ENCODE measurements at regions of chr9 and their contacts with region 1.

Region 1: GRCh38 chr9:89549031-89549644 is 51.2 kb upstream of the SEMA4D start:
- DNase-seq: peak; percentile 62
- ATAC-seq: peak; percentile 100
- H3K4me3 ChIP-seq: no peak overlapping the region
- H3K27ac ChIP-seq: no peak overlapping the region
- H3K4me1 ChIP-seq: peaks cover 10% of the 10 kb centered on the region
- H3K27me3 ChIP-seq: no peaks in the 10 kb centered on the region
- CTCF ChIP-seq: peak; percentile 91 to 95 (median 93)
- EP300 ChIP-seq: no peak
- POLR2A ChIP-seq: no peak
- RAD21 ChIP-seq: peak; percentile 92

Region 2: GRCh38 chr9:89340332-89340731 is 208.8 kb before region 1 on chr9:
- CTCF ChIA-PET with region 1: interaction called, 9 read pairs
- POLR2A ChIA-PET with region 1: no interaction called
- RAD21 ChIA-PET with region 1: interaction called, 18 read pairs
- SMC1A ChIA-PET with region 1: interaction called, 10 read pairs
- in situ Hi-C with region 1: no loop called
- intact Hi-C with region 1: no loop called
- DNase-seq: peak; percentile 45
- ATAC-seq: peak; percentile 97
- H3K4me3 ChIP-seq: peak overlapping the region; percentile 37; the same call in 1 of the 2 replicates
- H3K27ac ChIP-seq: peak overlapping the region; percentile 85
- H3K4me1 ChIP-seq: peaks cover 22% of the 10 kb centered on the region
- H3K27me3 ChIP-seq: no peaks in the 10 kb centered on the region
- CTCF ChIP-seq: no peak
- EP300 ChIP-seq: no peak
- POLR2A ChIP-seq: no peak
- RAD21 ChIP-seq: no peak

Region 3: DNA sequence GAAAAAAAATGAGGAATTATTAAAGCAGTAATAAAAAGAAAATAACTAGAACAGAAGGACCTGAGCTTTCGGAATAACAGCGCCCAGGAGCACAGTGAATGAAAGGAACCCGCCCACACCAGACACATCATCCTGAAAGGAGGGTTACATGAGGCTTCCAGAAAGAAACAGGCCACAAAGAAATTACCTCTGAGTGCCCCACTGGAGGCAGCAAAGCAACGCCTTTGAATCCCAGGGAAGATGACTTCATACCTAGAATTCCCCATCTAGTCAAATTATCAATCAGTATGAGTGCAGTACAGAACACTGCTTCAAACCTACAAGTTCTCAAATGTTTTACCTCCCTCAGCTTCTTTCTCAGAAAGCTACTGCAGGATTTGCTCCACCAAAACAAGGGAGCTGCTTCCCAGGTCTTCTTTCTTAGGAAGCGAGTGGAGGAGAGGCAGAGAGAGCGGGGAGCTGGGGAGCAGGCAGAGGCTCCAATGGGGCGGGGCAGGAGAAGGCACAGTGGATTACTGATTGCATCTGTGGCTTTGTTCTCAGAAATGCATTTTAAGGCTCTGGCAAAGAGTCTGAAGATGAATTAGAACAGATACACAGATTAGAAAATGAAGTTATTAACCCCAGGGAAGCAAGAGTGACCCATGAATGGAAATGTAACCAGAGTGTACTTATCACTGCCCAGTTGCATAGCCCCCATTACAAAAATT is 138.3 kb before region 1 on chr9:
- CTCF ChIA-PET with region 1: interaction called, 32 read pairs
- POLR2A ChIA-PET with region 1: no interaction called
- RAD21 ChIA-PET with region 1: interaction called, 58 read pairs
- SMC1A ChIA-PET with region 1: interaction called, 34 read pairs
- in situ Hi-C with region 1: no loop called
- intact Hi-C with region 1: loop called (anchors 1 kb)
- DNase-seq: peak; percentile 75
- ATAC-seq: peak; percentile 72
- H3K4me3 ChIP-seq: peak overlapping the region; percentile 48
- H3K27ac ChIP-seq: peak overlapping the region; percentile 66
- H3K4me1 ChIP-seq: peaks cover 66% of the 10 kb centered on the region
- H3K27me3 ChIP-seq: no peaks in the 10 kb centered on the region
- CTCF ChIP-seq: peak; percentile 34 to 63 (median 50); a peak in 5 of 6 replicates
- EP300 ChIP-seq: no peak
- POLR2A ChIP-seq: no peak
- RAD21 ChIP-seq: peak; percentile 79

Region 4: DNA sequence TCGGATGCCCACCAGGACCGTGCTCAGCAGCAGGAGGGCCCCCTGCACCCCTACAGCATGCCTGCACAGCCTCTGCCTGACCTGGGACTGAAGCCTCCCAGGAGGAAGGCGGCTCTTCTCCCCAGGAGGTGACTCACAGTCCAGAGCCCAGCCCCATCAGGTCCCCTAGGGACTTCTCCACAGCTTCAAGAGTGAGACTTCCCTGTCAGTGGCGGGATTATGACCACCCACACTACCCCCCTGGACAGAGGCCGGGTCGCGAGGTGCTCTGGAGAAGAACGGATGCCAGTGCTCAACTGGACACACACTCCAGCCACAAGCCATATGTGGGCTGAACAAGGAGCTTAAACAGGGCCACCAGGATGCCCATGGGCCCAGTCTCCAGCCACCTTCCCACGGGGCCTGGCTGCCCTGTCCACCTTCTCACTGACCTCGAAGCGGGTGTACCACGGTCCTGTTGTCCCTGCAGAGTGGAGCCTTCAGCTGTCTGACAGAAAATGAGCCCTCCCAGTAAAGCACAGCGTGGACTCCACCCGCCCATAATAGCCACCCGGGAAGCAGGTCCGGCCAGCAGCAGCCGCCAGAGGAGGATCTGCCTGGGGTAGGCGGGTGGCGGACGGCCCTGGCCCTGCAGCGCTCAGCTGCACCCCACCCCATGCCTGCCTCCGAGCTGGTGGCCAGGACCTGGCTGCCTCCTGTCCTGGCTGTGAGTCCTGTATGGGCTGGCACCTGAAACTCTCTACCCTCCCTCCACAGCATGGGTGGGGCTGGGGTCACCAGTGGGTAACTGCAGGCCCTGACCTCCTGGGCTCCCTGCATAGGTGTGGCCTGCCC is 105.9 kb before region 1 on chr9:
- CTCF ChIA-PET with region 1: interaction called, 15 read pairs
- POLR2A ChIA-PET with region 1: interaction called, 6 read pairs
- RAD21 ChIA-PET with region 1: interaction called, 16 read pairs
- SMC1A ChIA-PET with region 1: interaction called, 32 read pairs
- in situ Hi-C with region 1: no loop called
- intact Hi-C with region 1: no loop called
- DNase-seq: no peak
- ATAC-seq: peak; percentile 77
- H3K4me3 ChIP-seq: peak overlapping the region; percentile 3; the same call in 1 of the 2 replicates
- H3K27ac ChIP-seq: peak overlapping the region; percentile 63
- H3K4me1 ChIP-seq: peaks cover 51% of the 10 kb centered on the region
- H3K27me3 ChIP-seq: no peaks in the 10 kb centered on the region
- CTCF ChIP-seq: no peak
- EP300 ChIP-seq: no peak
- POLR2A ChIP-seq: no peak; the same call in 1 of the 2 replicates
- RAD21 ChIP-seq: no peak

Region 5: GRCh38 chr9:89483592-89484522 is 65.3 kb before region 1 on chr9:
- CTCF ChIA-PET with region 1: interaction called, 22 read pairs
- POLR2A ChIA-PET with region 1: no interaction called
- RAD21 ChIA-PET with region 1: interaction called, 18 read pairs
- SMC1A ChIA-PET with region 1: interaction called, 26 read pairs
- in situ Hi-C with region 1: no loop called
- intact Hi-C with region 1: no loop called
- DNase-seq: no peak
- ATAC-seq: peak; percentile 93
- H3K4me3 ChIP-seq: peak overlapping the region; percentile 68
- H3K27ac ChIP-seq: peak overlapping the region; percentile 26
- H3K4me1 ChIP-seq: peaks cover 50% of the 10 kb centered on the region
- H3K27me3 ChIP-seq: no peaks in the 10 kb centered on the region
- CTCF ChIP-seq: no peak
- EP300 ChIP-seq: no peak
- POLR2A ChIP-seq: no peak
- RAD21 ChIP-seq: no peak

Region 6: GRCh38 chr9:89529243-89530035 is 19.7 kb before region 1 on chr9:
- CTCF ChIA-PET with region 1: interaction called, 34 read pairs
- POLR2A ChIA-PET with region 1: interaction called, 3 read pairs
- RAD21 ChIA-PET with region 1: interaction called, 28 read pairs
- SMC1A ChIA-PET with region 1: interaction called, 19 read pairs
- in situ Hi-C with region 1: no loop called
- intact Hi-C with region 1: no loop called
- DNase-seq: no peak
- ATAC-seq: no peak
- H3K4me3 ChIP-seq: no peak overlapping the region
- H3K27ac ChIP-seq: no peak overlapping the region
- H3K4me1 ChIP-seq: peaks cover 3% of the 10 kb centered on the region
- H3K27me3 ChIP-seq: no peaks in the 10 kb centered on the region
- CTCF ChIP-seq: no peak
- EP300 ChIP-seq: no peak
- POLR2A ChIP-seq: no peak
- RAD21 ChIP-seq: no peak